A673 (cell line): ENCODE measurements at regions of chr13 and their contacts with region 1.

Region 1: DNA sequence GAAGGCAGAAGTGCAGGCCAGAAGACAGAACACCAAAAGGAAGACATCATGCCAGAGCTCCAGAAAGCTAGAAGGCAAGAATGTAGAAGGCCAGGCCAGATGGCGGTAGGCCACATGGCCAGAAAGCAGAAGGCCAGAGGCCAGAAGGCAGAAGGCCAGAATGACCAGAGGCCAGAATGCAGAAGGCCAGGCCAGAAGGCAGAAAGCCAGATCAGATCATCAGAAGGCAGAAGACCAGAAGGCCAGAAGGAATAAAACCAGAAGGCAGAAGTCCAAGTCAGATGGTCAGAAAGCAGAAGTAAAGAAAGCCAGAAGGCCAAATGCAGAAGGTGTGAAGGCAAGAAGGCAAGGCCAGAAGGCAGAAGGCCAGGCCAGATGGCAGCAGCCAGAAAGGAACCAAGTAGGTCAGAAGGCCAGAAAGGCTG is 185.0 kb downstream of the TUBA3C start:
- DNase-seq: no peak
- H3K4me3 ChIP-seq: no peak overlapping the region
- H3K27ac ChIP-seq: no peak overlapping the region
- H3K4me1 ChIP-seq: no peaks in the 10 kb centered on the region
- H3K27me3 ChIP-seq: no peaks in the 10 kb centered on the region
- CTCF ChIP-seq: no peak

Region 2: DNA sequence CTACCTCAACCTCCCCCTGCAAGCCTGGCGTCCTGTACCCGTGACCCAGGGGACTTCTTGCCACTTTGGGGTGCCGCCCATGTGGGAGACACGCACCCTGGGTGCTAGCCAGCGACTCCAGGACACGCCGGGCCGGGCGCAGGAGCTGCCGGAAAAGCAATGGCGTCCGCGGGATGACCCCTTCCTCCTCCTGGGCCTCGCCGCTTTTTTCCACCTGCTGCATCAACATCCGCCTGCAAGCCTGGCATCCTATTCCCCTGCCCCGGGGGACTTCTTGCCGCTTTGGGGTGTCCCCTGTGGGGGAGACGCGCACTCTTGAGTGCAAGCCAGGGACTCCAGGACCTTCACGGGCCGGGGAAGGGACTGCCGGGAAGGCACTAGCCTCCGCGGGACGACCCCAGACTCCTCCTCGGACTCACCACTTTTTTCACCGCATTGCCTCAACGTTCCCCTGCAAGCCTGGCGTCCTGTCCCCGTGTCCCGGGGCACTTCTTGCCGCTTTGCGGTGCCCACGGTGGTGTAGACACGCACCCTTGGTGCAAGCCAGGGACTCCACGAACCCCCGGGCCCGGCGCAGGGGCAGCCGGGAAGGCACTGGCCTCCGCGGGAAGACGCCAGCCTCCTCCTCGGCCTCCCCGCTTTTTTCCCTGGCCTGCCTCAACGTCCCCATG is 52.8 kb before region 1 on chr13:
- CTCF ChIA-PET with region 1: no interaction called
- POLR2A ChIA-PET with region 1: no interaction called
- intact Hi-C with region 1: loop called (anchors 10 kb)
- DNase-seq: no peak
- H3K4me3 ChIP-seq: no peak overlapping the region
- H3K27ac ChIP-seq: no peak overlapping the region
- H3K4me1 ChIP-seq: no peaks in the 10 kb centered on the region
- H3K27me3 ChIP-seq: no peaks in the 10 kb centered on the region
- CTCF ChIP-seq: no peak

Region 3: DNA sequence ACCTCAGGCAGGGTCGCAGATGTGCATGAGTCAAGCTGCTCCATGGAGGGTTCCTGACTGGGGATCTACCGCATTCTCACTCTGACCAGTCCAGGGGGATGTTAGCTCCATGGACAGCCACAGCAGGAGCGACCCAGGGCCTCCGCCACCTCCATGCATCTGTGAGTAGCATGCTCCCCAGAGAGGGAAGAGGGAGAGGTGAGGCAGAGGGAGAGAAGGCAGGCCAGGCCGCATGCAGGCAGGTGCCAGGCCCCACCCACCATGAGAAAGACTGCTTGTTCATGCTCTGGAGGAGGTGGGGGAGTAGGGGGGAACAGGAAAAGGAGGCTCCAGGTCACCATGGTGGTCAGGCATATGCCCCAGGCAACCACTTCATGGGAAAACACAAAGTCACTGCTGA is 164.7 kb after region 1 on chr13:
- CTCF ChIA-PET with region 1: no interaction called
- POLR2A ChIA-PET with region 1: no interaction called
- intact Hi-C with region 1: no loop called
- DNase-seq: no peak
- H3K4me3 ChIP-seq: no peak overlapping the region
- H3K27ac ChIP-seq: no peak overlapping the region
- H3K4me1 ChIP-seq: no peaks in the 10 kb centered on the region
- H3K27me3 ChIP-seq: no peaks in the 10 kb centered on the region
- CTCF ChIP-seq: no peak